ENCODE measurements at regions of chr4 and their contacts with region 1.

Region 1: DNA sequence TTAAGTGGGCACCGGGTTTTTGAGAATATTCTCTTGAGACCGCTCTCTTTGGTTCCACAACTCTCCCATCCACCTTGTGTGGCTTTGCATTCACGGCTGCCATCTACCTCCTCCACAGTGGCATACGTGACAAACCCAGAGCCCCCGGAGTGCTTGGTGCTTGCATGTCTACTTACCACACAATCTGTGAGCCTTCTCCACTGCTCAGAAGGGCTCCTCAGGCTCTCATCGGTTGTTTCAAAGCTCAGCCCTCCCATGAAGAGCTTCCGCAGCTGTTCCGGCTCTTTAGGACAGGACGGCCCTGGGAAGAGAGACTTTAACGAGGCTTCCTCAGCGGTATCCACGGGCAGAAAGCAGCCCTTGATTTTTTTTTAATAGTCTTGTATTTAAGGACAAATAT is 167.6 kb upstream of the ANK2 start:
- DNase-seq: no peak
- CTCF ChIP-seq: no peak

Region 2: DNA sequence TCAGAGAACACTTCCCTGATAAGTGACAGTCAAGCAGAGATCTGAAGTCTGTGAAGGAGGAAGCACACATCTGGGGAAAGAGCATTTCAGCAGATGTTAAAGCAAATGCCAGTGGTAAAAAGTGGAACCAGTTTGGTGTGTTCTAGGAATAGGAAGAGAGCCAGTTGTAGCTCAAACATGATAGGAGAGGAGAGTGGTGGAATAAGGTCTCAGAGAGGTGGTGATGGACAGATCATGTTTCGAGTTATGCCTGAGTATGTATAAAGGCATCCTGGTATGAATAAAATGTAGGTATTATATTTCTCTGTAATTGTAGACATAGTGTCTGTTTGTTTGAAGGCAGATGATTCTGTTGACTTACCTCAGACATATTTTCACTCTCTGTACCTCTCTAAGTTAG is 155.8 kb before region 1 on chr4:
- CTCF ChIA-PET with region 1: no interaction called
- POLR2A ChIA-PET with region 1: no interaction called
- DNase-seq: no peak
- CTCF ChIP-seq: no peak

Region 3: DNA sequence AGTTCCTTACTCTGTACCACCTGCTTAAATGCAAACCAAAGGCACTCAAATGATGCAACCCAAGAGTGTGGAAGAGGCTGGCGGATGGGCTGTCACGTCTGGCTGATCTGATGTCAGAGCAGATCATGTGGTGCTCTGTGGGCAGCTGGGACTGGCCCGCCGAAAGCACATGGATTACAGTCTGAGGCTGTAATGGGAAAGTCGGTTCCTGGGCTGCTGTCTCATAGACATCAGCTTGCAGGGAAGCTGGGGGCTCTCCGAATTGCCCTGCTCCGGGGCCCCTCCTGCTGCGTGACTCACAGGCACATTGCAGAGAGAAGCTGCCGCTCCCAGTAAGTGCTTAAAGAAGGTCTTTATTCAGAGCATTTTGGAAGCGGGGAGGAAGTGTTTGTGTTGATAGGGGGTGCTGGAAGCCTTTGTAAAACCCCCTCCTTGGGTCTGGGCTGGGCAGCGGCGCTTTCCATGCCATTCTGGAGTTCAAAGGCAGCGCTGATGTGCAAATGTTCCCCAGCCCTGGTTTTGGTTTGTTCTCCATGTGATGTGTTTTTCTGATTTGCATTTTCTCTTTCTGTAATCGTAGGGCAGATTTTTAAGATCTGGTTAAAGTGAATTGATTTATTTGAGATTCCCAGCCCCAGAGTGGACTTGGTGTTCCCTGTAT is 63.8 kb before region 1 on chr4:
- CTCF ChIA-PET with region 1: no interaction called
- POLR2A ChIA-PET with region 1: no interaction called
- DNase-seq: peak; percentile 82
- CTCF ChIP-seq: peak; percentile 6

Region 4: DNA sequence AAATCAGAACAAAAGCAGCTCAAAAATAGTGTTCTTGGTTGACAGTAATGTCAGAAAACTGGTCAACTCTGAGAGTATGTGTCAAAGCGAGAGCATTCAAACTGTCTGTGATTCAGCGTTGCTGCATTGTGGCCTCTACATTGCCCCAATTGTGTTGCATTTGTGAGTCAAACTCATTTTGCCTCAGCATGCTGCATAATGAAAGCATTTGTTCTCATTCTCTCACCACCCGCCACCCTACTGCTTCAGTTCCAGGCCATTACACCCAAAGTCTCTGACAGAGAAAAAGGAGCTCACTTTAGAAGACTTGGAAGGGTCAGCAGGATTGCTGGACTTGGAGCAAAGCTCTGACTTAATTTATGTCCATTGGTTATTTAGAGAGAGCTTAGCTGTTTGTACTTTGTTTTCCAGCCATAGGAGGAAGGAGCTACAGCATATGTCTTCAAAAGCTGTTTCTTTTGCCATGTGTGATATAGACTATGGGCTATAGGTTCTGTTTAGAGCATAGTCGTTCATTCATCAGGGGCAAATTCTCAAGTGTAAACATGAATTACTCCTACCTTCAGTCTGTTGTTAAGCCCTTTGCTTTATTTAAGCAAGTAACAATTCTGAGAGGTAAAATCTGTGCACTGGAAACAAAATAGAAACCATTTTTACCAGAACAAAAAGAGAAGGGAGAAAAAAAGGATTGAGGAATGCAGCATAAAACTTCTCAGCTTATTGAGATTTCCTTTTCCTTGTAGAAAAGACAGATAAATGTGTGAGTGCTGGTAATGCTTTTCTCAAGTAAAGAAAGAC is 14.2 kb after region 1 on chr4:
- CTCF ChIA-PET with region 1: interaction called, 10 read pairs
- POLR2A ChIA-PET with region 1: no interaction called
- DNase-seq: no peak
- CTCF ChIP-seq: no peak

Region 5: GRCh38 chr4:112927544-112927943 is 45.7 kb after region 1 on chr4:
- CTCF ChIA-PET with region 1: no interaction called
- POLR2A ChIA-PET with region 1: no interaction called
- DNase-seq: no peak
- CTCF ChIP-seq: no peak

Region 6: GRCh38 chr4:112978691-112979472 is 97.0 kb after region 1 on chr4:
- CTCF ChIA-PET with region 1: no interaction called
- POLR2A ChIA-PET with region 1: no interaction called
- DNase-seq: no peak
- CTCF ChIP-seq: no peak